ENCODE measurements at regions of chr17 and their contacts with region 1.

Region 1: DNA sequence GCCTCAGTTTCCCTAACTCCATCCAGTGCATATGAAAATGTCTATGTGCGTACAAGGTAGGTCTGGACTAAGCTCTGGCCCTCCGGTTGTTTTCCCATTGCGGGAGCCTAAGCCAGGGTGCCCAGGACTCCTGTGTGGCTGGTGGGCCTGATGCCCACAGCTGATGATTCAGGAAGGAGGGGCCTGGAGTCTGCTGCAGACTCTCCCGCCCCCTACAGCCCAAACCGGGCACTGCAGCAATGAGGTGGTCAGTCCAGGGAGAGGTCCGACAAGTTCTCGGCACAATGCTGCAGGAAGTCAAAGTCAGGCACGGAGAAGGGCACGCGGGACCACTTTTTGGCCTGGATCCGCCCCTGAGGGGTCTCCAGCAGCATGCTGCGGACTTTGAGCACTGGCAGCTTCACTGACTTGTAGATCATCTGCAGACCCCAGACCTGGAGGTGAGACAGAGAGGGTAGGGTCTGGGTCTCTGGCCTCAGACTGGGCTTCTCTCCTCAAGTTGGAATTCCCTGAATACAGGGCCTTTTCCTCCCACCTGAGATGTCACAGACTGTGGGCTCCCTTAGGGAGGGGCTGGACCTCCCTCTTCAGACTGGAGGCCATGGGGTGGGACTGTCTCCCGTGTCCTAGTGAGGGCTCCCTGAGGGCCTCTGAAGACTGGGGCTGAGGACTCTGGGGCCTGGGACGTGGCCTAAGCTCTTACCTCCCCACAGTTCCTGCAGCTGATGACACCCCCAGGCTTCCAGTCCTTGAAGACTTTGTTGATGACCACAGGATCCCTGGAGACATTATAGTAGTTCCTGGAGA is 3.4 kb upstream of the ZNF385C start:
- DNase-seq: peak; percentile 37 to 81 (median 79)
- H3K4me3 ChIP-seq: no peak overlapping the region
- H3K27ac ChIP-seq: no peak overlapping the region
- H3K27me3 ChIP-seq: peaks cover 0 to 17% (median 10%) of the 10 kb centered on the region in 45 donors
- CTCF ChIP-seq: peak; percentile 45 to 90 (median 80)

Region 2: DNA sequence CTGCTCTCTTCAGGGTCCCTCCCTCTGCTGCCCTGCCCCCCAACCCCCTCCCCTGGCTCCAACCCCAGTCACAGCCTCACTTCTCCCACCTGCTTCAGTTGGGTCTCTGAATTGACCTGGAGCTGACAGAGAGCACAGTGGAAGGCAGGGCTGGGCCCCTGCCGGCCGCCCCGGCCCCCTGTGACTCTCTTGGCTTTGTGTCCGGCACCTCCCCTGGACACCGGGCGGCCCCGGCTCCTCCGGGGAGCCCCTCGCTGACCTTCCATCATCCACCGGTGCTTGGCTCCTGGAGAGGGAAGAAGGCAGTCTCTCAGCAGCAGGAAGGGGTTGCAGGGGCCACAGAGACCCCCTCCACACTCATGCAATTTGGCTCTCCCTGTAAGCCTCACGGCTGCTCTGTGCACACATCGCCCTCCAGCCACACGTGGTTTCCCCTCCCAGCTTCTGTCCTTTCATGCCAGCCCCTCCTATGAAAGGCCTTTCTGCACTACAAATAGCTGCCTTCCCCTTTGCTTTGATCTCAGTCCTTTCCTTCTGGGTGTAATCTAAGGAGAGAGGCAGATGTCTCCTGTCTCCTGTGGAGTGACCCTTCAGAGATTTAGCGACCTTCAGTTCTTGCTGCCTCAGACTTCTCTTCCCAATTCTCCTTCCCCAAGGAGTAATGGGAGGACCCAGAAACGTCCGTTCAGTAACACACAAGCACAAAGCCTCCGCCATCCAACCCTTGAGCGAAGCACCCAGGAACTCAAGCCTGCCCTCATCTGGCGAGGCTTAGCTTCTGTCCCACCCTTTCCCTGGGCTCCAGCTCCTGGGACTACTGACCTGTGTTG is 73.5 kb before region 1 on chr17:
- intact Hi-C with region 1: loop called in 1 of 2 experiments (anchors 5 kb)
- DNase-seq: no peak
- H3K4me3 ChIP-seq: no peak overlapping the region
- H3K27ac ChIP-seq: no peak overlapping the region
- H3K27me3 ChIP-seq: no peaks in the 10 kb centered on the region
- CTCF ChIP-seq: no peak

Region 3: DNA sequence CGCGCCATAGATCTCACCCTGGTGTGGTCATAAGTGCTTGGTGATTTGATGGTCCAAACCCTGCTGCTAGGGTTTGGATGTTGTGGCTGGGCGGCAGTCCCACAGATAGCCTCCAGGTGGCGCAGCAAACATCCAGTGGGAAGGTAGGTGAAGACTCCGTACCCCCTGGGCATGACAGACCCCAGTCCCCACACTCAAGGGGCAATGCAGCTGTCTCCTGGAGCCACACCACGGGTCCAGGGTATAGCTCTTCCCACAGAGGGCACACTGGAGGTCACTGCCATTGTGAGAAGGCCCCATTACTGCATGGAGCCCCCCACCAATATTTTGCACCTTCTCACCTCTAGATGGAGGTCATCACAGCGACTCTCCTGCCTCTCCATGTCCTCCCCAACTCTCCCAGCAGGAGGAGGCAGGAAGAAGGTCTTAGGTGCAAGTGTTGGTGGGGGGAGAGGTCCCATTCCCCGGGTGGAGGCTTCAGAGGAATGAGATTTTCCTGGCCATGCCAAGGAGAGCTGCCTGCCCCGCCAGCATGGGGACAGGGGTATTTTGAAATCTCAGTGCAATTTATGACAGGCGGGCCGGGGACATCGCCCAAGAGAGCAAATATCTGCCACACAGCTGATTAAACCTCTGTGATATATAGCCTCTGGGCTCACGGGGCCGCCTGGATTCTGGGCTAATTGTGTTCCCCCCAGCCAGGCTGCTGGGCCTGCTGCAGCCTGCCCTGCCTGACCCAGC is 34.2 kb before region 1 on chr17:
- intact Hi-C with region 1: loop called in 1 of 2 experiments (anchors 5 kb)
- DNase-seq: peak in 9 of 10 donors; percentile 40 to 70 (median 57)
- H3K4me3 ChIP-seq: no peak overlapping the region
- H3K27ac ChIP-seq: no peak overlapping the region
- H3K27me3 ChIP-seq: peaks cover 0 to 41% (median 20%) of the 10 kb centered on the region in 45 donors
- CTCF ChIP-seq: peak; percentile 63 to 98 (median 89)